Heart right ventricle (tissue), 16 donors: ENCODE measurements at regions of chr9 and their contacts with region 1.

Region 1: GRCh38 chr9:37920471-37921167 is 16.7 kb upstream of the SLC25A51 start:
- DNase-seq: no peak
- ATAC-seq: no peak
- H3K4me3 ChIP-seq: no peak overlapping the region
- H3K27ac ChIP-seq: no peak overlapping the region
- H3K4me1 ChIP-seq: peaks cover 11 to 55% (median 23%) of the 10 kb centered on the region in 9 donors
- H3K27me3 ChIP-seq: no peaks in the 10 kb centered on the region
- CTCF ChIP-seq: no peak

Region 2: GRCh38 chr9:37966412-37967271 is 46.0 kb after region 1 on chr9:
- intact Hi-C with region 1: no loop called
- DNase-seq: no peak
- ATAC-seq: no peak
- H3K4me3 ChIP-seq: no peak overlapping the region
- H3K27ac ChIP-seq: no peak overlapping the region
- H3K4me1 ChIP-seq: peaks cover 7 to 63% (median 46%) of the 10 kb centered on the region in 9 donors
- H3K27me3 ChIP-seq: no peaks in the 10 kb centered on the region
- CTCF ChIP-seq: no peak

Region 3: GRCh38 chr9:38017149-38017884 is 96.7 kb after region 1 on chr9:
- intact Hi-C with region 1: loop called in 5 of 10 experiments (anchors 5 to 10 kb)
- DNase-seq: peak; percentile 68 to 73
- ATAC-seq: peak; percentile 63 to 87 (median 82)
- H3K4me3 ChIP-seq: no peak overlapping the region
- H3K27ac ChIP-seq: peak overlapping the region; percentile 12 to 88 (median 60)
- H3K4me1 ChIP-seq: peaks cover 33 to 79% (median 59%) of the 10 kb centered on the region in 9 donors
- H3K27me3 ChIP-seq: no peaks in the 10 kb centered on the region
- CTCF ChIP-seq: peak; percentile 27 to 61 (median 50)